A673 (cell line): ENCODE measurements at regions of chr10 and their contacts with region 1.

Region 1: GRCh38 chr10:22003079-22003913 is at the start of gene DNAJC1:
- DNase-seq: peak; percentile 98
- H3K4me3 ChIP-seq: peak within 1 kb of the TSS; percentile 88
- H3K27ac ChIP-seq: peak within 1 kb of the TSS; percentile 85
- H3K4me1 ChIP-seq: peaks cover 16% of the 10 kb centered on the region
- H3K27me3 ChIP-seq: no peaks in the 10 kb centered on the region
- CTCF ChIP-seq: no peak; the same call in 1 of the 2 replicates
- total RNA-seq, gene DNAJC1: 17.4 and 21.2 TPM in 2 replicates

Region 2: GRCh38 chr10:22022257-22023032 is 19.1 kb after region 1 on chr10:
- CTCF ChIA-PET with region 1: no interaction called
- POLR2A ChIA-PET with region 1: no interaction called
- intact Hi-C with region 1: no loop called
- DNase-seq: peak; percentile 6
- H3K4me3 ChIP-seq: no peak overlapping the region
- H3K27ac ChIP-seq: no peak overlapping the region
- H3K4me1 ChIP-seq: no peaks in the 10 kb centered on the region
- H3K27me3 ChIP-seq: no peaks in the 10 kb centered on the region
- CTCF ChIP-seq: no peak

Region 3: GRCh38 chr10:22560913-22561239 is 557.6 kb after region 1 on chr10:
- CTCF ChIA-PET with region 1: no interaction called
- POLR2A ChIA-PET with region 1: no interaction called
- intact Hi-C with region 1: loop called (anchors 10 kb)
- DNase-seq: peak; percentile 81
- H3K4me3 ChIP-seq: no peak overlapping the region
- H3K27ac ChIP-seq: no peak overlapping the region
- H3K4me1 ChIP-seq: peaks cover 25% of the 10 kb centered on the region
- H3K27me3 ChIP-seq: no peaks in the 10 kb centered on the region
- CTCF ChIP-seq: no peak